Heart right ventricle (tissue), 16 donors: ENCODE measurements at regions of chr21 and their contacts with region 1.

Region 1: DNA sequence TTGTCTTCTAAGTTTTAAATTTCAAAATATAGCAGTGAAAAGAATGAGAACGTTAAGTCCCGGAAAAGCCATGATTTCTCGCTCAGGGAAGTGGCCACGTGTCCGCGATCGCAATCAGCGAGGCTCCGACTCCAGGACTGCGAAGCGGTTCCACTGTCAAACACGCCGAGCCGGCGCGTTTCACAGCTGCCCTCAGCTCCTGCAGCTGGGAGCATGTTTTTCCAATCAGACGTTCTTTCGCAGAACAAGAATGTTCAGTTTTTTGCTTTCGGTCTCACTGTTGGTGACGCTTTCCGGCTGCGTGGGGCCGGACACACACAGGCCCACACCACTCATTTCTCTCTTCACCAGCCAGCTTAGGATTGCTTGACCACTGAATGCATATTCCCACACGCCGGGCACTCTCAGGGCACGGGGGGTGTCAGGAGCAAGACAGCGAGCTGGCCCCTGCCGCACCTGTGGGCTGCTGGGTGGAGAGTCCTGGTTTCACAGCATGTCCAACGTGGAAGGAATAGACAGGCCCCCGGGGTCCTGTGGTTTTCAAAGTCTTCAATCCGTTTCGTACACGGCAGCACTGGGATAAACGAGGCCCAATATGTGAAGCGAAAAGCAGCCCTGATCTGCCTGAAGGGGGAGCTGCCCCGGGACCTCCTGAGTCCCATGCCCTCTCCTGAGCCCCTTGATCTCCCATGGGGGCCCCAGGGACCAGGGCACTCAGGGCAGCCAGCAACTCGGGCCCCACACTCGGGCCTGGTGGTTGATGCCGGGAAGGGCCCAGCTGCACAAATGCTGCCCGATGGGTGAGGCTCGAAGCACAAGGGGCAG is 47.3 kb upstream of the COL18A1 start:
- DNase-seq: peak; percentile 72 to 75
- ATAC-seq: peak; percentile 28 to 83 (median 76)
- H3K4me3 ChIP-seq: peak overlapping the region in 1 of 10 donors; percentile 3
- H3K27ac ChIP-seq: peak overlapping the region; percentile 80 to 93 (median 89)
- H3K4me1 ChIP-seq: peaks cover 21 to 71% (median 41%) of the 10 kb centered on the region in 9 donors
- H3K27me3 ChIP-seq: no peaks in the 10 kb centered on the region
- CTCF ChIP-seq: peak in 3 of 9 donors; percentile 8 to 30 (median 10)

Region 2: GRCh38 chr21:44572966-44573583 is 784.6 kb before region 1 on chr21:
- intact Hi-C with region 1: no loop called
- DNase-seq: no peak
- ATAC-seq: no peak
- H3K4me3 ChIP-seq: no peak overlapping the region
- H3K27ac ChIP-seq: no peak overlapping the region
- H3K4me1 ChIP-seq: no peaks in the 10 kb centered on the region
- H3K27me3 ChIP-seq: peaks cover 0 to 29% (median 0%) of the 10 kb centered on the region in 7 donors
- CTCF ChIP-seq: no peak

Region 3: GRCh38 chr21:44920694-44921604 is 436.7 kb before region 1 on chr21 and contains the start of gene ITGB2:
- intact Hi-C with region 1: no loop called
- DNase-seq: peak in 1 of 2 donors; percentile 52
- ATAC-seq: peak in 7 of 8 donors; percentile 49 to 73 (median 61)
- H3K4me3 ChIP-seq: peak within 1 kb of the TSS in 8 of 10 donors; percentile 21 to 72 (median 36)
- H3K27ac ChIP-seq: peak within 1 kb of the TSS in 4 of 10 donors; percentile 31 to 96 (median 56)
- H3K4me1 ChIP-seq: peaks cover 0 to 71% (median 0%) of the 10 kb centered on the region in 9 donors
- H3K27me3 ChIP-seq: peaks cover 0 to 48% (median 33%) of the 10 kb centered on the region in 7 donors
- CTCF ChIP-seq: no peak
- total RNA-seq, gene ITGB2: 5.1 to 151 (median 10.3) TPM

Region 4: DNA sequence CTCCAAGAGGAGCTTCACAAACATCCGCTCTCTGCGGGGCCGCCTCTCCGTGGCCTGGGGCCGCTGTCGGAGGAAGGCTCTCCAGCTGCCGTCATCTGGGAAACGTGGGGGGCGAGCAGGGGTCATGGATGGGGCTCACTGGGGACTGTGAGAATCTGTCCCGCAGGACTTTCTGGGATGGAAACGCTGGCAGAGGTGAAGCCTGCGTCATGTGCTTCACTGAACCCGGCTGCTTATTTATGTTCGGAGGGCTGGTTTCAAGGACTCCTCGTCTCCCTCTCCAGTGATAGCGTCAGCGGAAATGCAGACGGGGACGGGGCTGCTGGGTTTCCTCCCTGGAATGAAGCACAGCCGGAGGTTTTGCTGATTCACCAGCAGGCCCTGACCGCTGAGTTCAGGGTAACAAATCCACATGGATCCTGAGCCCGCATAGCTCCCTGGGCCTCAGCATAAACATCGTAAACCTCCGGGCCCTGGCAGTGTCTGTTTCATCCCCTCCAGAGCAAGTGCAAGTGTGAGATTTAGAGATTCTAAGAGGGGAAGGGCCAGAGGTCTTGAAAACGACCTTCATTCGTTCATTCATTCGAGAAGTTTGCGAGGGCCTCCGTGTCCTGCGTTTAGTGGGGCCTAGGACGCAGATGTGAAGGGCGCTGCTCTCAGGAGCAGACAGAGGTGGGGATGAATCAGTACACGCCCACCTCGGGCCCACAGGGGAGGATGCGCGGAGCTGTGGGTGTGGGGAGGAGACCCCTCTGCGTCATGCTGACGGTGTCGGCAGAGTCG is 62.9 kb before region 1 on chr21:
- intact Hi-C with region 1: loop called in 2 of 10 experiments (anchors 2 to 5 kb)
- DNase-seq: peak; percentile 89 to 92
- ATAC-seq: peak; percentile 55 to 87 (median 79)
- H3K4me3 ChIP-seq: peak overlapping the region in 3 of 10 donors; percentile 0 to 21 (median 18)
- H3K27ac ChIP-seq: peak overlapping the region; percentile 84 to 97 (median 94)
- H3K4me1 ChIP-seq: peaks cover 26 to 73% (median 46%) of the 10 kb centered on the region in 9 donors
- H3K27me3 ChIP-seq: no peaks in the 10 kb centered on the region
- CTCF ChIP-seq: no peak

Region 5: DNA sequence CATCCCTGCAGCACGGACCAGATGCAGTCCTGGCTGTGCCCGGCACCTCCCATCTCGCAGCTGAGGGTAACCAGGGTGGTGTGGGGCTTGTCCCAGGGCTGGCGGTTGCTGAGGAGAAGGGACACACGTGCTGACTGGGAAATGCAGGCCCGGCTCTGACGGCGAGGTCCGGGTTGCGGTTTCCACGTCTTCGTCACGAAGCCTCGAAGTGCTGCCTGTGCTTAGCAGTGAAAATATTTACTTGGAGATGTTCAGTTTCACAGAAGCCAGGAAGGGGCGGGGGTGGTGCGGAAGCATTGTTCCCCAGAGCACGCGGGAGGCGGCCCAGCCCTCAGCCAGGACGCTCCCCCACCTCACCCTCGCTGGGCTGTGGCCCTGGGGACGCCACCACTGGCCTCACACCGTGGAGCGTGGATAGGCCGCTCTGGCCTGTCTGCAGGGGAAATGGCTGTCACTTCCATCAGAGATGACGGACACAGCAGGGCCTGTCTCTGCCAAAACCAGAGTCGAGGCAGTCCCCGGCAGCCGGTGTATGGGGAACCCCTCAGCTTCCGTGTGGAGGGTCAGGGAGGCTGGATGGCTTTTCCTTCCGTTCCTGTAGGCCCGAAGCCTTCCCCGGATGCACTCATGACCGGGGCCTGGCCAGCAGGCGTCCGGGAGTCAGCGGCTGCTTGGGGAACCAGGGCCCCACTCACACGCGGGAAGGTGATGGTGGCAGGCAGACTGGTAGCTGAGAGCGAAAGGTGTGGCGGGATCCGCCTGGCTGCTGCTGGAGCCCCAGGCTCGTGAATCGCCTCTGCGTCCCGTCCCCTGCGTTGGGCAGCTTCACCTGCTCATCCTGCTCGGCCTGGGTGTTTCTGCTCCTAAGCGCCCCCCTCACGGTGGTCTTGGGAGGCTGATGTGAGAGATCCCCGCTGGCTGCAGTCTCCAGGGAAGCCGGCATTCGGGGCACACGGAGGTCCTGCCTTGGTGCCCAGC is 55.3 kb before region 1 on chr21:
- intact Hi-C with region 1: loop called in 5 of 10 experiments (anchors 5 to 10 kb)
- DNase-seq: peak; percentile 82 to 92
- ATAC-seq: peak; percentile 70 to 88 (median 82)
- H3K4me3 ChIP-seq: no peak overlapping the region
- H3K27ac ChIP-seq: peak overlapping the region; percentile 88 to 97 (median 90)
- H3K4me1 ChIP-seq: peaks cover 27 to 68% (median 48%) of the 10 kb centered on the region in 9 donors
- H3K27me3 ChIP-seq: no peaks in the 10 kb centered on the region
- CTCF ChIP-seq: peak in 1 of 9 donors; percentile 11

Region 6: GRCh38 chr21:45309069-45309986 is 48.3 kb before region 1 on chr21:
- intact Hi-C with region 1: loop called in 4 of 10 experiments (anchors 5 to 10 kb)
- DNase-seq: peak; percentile 77 to 81
- ATAC-seq: peak; percentile 25 to 69 (median 50)
- H3K4me3 ChIP-seq: no peak overlapping the region
- H3K27ac ChIP-seq: peak overlapping the region; percentile 31 to 89 (median 64)
- H3K4me1 ChIP-seq: peaks cover 14 to 45% (median 35%) of the 10 kb centered on the region in 9 donors
- H3K27me3 ChIP-seq: no peaks in the 10 kb centered on the region
- CTCF ChIP-seq: peak; percentile 54 to 83 (median 74)

Region 7: DNA sequence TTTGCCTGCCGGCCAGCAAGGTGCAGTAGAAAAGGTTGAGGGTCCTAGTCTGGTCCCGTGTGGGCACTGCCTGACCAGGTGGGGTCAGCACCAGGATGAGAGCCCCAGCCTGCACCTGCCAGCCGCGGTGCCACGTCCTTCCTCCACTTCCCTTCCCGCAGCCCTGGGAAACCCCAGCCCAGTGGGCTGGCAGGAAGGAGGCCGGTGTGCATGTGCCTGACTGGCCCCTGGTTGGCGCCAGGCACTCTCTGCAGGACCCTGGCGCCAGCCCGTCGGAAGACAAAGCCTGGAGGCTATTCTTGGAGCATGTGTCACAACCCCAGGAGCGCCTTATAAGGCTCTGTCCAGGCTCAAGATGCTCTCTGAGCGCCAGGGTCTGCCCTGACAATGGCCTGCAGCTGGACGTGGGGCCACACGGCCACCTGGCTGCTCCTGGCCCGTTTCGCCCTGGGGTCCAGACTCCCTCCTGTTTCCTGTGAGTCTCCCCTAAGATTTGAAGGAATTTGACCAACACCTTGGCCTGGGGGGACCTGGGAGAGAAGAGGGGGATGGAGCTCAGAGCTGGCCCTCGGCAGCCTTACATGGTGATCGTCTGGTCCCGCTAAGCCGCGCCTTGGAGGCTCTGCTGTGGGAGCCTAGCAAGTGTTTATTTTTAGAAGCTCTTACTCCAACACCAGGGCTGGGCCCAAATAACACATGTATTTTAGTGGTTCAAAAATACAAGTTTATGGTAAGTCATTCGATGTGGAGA is 38.0 kb before region 1 on chr21:
- intact Hi-C with region 1: loop called in 5 of 10 experiments (anchors 1 to 5 kb)
- DNase-seq: peak; percentile 68 to 76
- ATAC-seq: peak; percentile 71 to 88 (median 84)
- H3K4me3 ChIP-seq: no peak overlapping the region
- H3K27ac ChIP-seq: peak overlapping the region; percentile 78 to 94 (median 85)
- H3K4me1 ChIP-seq: peaks cover 34 to 65% (median 46%) of the 10 kb centered on the region in 9 donors
- H3K27me3 ChIP-seq: no peaks in the 10 kb centered on the region
- CTCF ChIP-seq: peak in 5 of 9 donors; percentile 18 to 49 (median 28)

Region 8: DNA sequence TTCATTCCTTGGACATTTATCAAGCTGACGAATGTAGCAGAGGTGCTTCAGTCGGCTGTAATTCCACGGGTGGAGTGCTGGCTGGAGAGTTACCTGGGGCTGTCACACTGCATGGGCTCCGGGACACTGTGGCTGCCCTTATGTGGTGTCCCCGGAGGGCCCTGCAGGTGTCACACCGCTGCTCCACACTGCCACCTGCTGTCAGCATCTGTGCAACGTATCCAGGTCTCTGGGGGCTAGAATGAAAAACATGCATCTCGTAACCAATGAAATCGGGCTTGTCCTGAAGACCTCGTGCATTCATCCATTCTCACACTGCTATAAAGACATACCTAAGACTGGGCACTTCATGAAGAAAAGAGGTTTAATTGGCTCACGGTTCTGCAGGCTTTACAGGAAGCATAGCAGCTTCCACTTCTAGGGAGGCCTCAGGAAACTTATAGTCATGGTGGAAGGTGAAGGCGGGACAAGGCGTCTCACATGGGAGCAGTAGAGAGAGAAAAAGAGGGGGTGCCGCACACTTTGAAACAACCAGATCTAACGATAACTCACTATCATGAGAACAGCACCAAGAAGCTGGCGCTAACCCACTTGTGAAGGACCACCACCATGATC is 239.2 kb after region 1 on chr21:
- intact Hi-C with region 1: no loop called
- DNase-seq: peak; percentile 64 to 73
- ATAC-seq: peak; percentile 68 to 85 (median 78)
- H3K4me3 ChIP-seq: no peak overlapping the region
- H3K27ac ChIP-seq: no peak overlapping the region
- H3K4me1 ChIP-seq: peaks cover 0 to 6% (median 0%) of the 10 kb centered on the region in 9 donors
- H3K27me3 ChIP-seq: peaks cover 0 to 43% (median 18%) of the 10 kb centered on the region in 7 donors
- CTCF ChIP-seq: peak; percentile 52 to 90 (median 79)